AG04449 (cell line): ENCODE measurements at regions of chr3 and their contacts with region 1.

Region 1: DNA sequence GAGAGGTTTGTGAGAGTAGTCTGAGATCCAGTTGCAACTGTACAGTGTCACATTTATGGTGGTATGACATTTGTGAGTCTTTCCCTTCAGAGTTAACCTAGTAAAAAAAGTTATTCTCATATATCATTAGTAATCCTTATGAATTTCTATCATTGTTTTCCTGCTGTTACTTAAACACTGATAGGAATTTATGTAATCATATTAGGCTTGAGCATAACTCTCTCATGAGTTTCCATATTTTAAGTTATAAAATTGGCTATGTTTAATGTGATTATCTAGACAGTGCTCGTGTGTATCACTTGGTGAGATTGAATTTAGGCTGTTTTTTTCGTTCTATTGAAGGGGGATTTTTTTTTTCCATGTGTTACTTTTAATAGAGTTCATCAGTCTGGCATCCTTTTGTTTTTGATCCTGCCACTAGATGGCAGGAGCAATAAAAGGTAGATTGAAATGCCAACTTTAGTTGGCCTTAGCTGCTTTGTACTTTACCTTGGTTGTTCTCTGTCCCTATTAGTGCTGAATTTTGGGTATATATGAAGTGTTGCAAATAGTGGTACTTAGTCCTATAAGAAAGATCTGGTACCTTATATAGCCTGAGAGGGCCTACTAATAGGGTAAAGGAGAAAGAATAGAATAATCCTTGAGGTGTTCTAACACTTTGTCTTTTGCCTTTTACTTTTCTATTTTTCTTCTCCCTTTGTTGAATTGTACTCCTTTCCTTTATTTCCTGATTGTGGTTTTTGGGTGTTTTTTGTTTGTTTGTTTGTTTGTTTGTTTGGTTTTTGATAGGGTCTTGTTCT is 17.9 kb downstream of the STT3B start:
- DNase-seq: no peak
- H3K4me3 ChIP-seq: no peak overlapping the region
- CTCF ChIP-seq: peak; percentile 47

Region 2: DNA sequence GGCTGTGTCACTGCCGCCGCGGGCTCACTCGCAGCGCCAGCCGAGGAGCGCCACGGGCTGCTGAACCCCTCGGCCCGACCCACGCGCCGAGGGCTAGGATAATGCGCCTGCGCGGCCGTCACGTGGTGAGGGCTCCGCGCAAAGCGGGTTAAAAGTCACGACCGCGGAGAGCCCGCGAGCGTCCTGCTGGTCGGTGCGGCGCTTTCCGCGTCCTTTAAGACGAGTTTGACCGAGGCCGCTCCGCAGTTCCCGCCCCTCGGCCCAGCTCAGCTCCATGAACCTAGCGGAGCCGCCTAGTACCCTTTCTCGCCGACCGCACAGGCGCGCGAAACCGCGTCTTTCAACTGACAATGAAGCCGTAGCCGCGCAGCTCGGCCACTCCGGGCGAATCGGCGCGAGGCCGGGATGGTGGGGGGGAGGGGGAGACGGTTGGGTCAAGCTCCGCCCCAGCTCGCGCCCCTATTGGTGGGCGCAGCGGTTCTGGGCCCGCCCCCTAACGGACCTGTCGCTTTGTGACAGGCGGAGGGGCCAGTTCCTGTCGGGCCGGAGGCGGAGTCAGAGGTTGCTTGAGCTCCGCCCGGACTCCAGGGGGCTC is 18.6 kb before region 1 on chr3:
- CTCF ChIA-PET with region 1: interaction called, 14 read pairs
- POLR2A ChIA-PET with region 1: no interaction called
- DNase-seq: peak; percentile 92
- H3K4me3 ChIP-seq: peak overlapping the region; percentile 83
- CTCF ChIP-seq: no peak

Region 3: DNA sequence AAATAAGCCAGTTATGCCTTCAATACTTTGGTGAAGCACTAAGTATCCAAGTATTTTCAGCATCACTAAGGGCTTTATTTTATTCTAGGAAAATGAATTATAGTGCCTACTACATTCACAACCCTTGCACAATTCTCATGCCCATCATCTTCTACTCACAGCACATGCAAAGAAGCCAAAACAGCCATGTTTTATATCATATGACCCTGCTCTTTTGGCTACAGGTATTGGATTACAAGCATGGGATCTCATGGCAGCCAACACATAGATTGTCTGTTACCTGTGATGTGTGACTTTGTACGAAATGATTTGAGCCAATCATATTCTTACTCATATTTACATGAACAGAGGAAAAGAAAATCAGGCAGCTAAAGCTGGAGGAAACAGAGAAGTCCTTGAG is 20.7 kb after region 1 on chr3:
- CTCF ChIA-PET with region 1: interaction called, 12 read pairs
- POLR2A ChIA-PET with region 1: no interaction called
- DNase-seq: no peak
- H3K4me3 ChIP-seq: no peak overlapping the region
- CTCF ChIP-seq: no peak

Region 4: DNA sequence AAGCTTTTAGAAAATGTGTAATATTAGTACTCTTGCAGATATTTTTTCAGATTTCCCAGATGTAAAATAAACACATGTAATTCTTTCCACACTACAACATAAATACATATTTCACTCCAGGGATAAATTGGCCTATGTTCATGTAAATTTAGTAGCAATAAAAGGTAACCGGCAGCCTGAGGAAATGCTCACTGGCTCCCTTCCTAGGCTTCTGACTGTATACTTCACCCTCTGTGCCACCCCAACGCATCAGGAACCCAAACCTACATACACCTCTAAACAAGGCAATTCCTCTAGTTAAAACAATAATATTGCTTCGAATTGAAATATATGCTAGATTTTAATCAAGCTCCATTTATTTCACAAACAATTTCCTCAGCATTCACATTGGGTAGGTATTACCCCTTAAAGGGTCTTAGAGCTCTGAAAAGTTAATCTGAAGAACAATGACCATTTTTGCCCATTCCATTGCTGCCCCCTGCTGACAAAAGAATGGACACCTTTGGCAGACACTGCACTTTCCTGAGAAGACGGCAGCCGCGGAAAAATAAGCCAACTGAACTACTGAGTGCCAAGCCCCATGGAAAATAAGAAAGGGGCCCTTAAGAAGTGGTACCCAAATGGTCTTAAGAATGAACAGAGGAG is 217.9 kb after region 1 on chr3:
- CTCF ChIA-PET with region 1: interaction called, 11 read pairs
- POLR2A ChIA-PET with region 1: no interaction called
- DNase-seq: no peak
- H3K4me3 ChIP-seq: no peak overlapping the region
- CTCF ChIP-seq: peak; percentile 56